ENCODE measurements at regions of chr13 and their contacts with region 1.

Region 1: DNA sequence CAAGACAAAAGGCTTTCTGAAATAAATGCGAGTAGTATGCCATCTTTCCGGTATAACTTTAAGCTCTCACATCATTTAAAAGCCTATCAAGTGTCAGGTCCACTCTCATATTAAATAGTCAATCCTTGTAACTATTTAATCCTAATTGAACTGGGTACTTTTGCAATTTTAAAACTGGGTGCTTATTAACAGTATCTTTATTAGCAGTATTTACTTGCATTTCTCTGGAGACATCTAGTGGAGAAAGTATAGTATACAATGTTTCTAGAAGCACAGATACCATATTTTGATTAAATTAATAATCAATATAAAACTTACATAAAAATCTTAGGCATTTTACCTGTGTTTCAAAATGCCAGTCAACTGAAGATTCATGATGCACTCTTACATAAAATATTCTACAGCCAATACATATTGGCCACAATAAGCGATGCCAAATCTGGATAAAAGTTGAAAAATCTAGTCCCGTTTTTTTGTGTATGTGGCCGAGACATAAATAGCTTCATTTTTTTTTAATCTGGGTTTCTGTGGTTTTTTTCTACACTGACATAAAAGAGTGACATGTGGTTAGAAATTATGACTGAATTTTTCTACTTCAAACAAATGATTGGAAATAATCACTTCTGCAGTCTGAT is 4.3 kb upstream of the POSTN start:
- DNase-seq: no peak
- ATAC-seq: peak; percentile 66
- H3K4me3 ChIP-seq: no peak overlapping the region
- H3K27ac ChIP-seq: no peak overlapping the region
- H3K4me1 ChIP-seq: peaks cover 0 to 3% of the 10 kb centered on the region in 2 donors
- H3K27me3 ChIP-seq: no peaks in the 10 kb centered on the region

Region 2: GRCh38 chr13:37074703-37075102 is 528.2 kb before region 1 on chr13:
- intact Hi-C with region 1: loop called in 1 of 2 experiments (anchors 10 kb)
- DNase-seq: no peak
- ATAC-seq: no peak
- H3K4me3 ChIP-seq: no peak overlapping the region
- H3K27ac ChIP-seq: no peak overlapping the region
- H3K4me1 ChIP-seq: no peaks in the 10 kb centered on the region
- H3K27me3 ChIP-seq: no peaks in the 10 kb centered on the region

Region 3: GRCh38 chr13:37109051-37109678 is 493.7 kb before region 1 on chr13:
- intact Hi-C with region 1: loop called (anchors 2 to 5 kb)
- DNase-seq: no peak
- ATAC-seq: peak; percentile 76
- H3K4me3 ChIP-seq: no peak overlapping the region
- H3K27ac ChIP-seq: no peak overlapping the region
- H3K4me1 ChIP-seq: no peaks in the 10 kb centered on the region
- H3K27me3 ChIP-seq: no peaks in the 10 kb centered on the region

Region 4: DNA sequence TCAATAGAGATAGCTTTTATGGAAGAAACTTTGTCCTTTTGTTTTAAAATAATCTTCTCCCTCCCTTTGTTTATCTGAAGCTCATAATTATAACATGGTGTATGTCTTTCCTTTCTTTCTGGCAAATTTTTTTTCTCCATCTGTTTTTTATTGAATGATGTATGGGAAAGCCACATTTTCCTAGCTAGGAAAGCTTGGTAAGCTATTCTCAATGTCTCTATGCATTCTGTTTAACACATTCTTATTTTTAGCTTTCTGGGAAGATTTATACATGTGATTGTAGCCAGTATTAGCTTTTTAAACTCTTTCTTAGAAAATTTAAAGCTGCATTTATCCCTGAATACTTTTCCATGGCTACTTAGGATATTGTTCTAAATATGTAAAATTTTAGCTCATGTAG is 372.5 kb before region 1 on chr13:
- intact Hi-C with region 1: loop called in 1 of 2 experiments (anchors 10 kb)
- DNase-seq: no peak
- ATAC-seq: no peak
- H3K4me3 ChIP-seq: no peak overlapping the region
- H3K27ac ChIP-seq: no peak overlapping the region
- H3K4me1 ChIP-seq: no peaks in the 10 kb centered on the region
- H3K27me3 ChIP-seq: no peaks in the 10 kb centered on the region